ENCODE measurements at regions of chr7 and their contacts with region 1.

Region 1: DNA sequence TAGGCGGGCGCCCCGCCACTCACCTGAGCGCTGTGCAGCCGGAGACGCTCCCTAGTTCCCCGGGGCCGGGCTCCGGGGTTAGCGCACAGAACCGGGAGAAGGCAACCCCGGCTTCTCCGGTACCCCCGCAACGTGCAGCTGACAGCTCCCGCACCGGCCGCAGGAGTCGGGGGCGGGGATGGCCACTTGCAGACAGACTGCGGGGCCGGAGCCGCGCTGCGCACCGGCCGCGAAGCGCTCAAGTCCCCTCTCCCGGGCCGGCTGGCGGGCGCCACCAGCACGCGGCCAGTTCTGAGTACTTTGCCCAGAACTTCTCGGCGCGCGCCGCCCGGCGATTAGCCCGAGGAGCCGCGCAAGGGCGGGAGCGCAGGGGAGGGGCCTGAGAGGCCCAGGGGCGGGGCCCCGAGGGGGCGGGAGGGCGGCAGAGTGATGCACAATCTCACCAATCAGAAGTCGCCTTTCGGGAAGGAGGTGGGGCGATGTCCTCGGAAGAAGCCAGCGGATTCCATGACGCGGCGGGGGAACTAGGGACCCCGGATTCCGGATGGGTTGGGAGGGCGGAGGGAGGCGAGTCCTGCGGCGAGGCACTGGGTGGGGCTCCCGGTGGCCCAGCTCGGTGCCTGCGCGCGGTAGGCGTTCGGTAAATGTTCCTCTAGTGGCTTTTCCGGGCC is at the start of gene OSBPL3:
- DNase-seq: peak; percentile 95
- ATAC-seq: peak; percentile 91
- H3K4me3 ChIP-seq: peak within 1 kb of the TSS; percentile 77
- H3K27ac ChIP-seq: peak within 1 kb of the TSS; percentile 84
- H3K4me1 ChIP-seq: peaks cover 8% of the 10 kb centered on the region
- H3K27me3 ChIP-seq: no peaks in the 10 kb centered on the region
- CTCF ChIP-seq: peak; percentile 33; the same call in 1 of the 2 replicates
- POLR2A ChIP-seq: peak; percentile 79
- RAD21 ChIP-seq: peak; percentile 41
- total RNA-seq, gene OSBPL3: 29.9 and 30.0 TPM in 2 replicates

Region 2: DNA sequence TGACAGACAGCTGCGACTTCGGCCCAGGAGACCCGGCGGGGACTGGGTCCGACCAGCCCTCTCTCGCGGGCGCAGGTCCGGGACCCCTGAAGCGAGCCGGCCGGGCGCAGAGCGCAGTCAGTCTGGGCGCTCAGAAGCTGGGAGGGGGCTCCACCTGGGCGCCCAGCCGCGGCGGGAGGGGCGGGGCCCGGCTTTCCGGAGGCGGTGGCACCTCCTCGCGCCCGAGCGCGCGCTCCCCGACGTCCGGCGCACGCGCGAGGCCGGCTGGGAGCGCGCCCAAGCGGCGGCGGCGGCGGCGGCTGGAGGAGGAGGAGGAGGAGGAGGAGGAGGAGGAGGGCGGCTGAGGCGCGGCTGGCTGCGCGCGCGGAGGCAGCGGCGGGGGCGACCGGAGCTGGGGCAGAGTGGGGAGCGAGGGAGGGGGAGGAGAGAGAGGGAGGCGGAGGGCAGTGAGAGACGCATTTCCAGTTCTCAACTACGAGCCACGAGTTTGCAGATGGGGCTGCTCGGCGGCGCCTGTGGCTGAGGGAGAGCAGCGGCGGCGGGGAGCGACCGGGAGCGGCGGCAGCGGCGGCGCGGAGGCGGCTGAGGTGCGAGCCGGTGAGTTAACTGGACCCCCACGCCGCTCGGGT is 406.9 kb before region 1 on chr7 and contains the start of gene PALS2:
- CTCF ChIA-PET with region 1: no interaction called
- POLR2A ChIA-PET with region 1: no interaction called
- dilution Hi-C with region 1: no loop called
- in situ Hi-C with region 1: no loop called
- intact Hi-C with region 1: loop called (anchors 10 kb)
- DNase-seq: peak; percentile 58
- ATAC-seq: peak; percentile 76
- H3K4me3 ChIP-seq: peak within 1 kb of the TSS; percentile 98
- H3K27ac ChIP-seq: peak within 1 kb of the TSS; percentile 65
- H3K4me1 ChIP-seq: 0 out of 2 replicates have a peak, but pooled peaks cover 2% of the 10 kb centered on the region
- H3K27me3 ChIP-seq: peaks cover 26% of the 10 kb centered on the region
- CTCF ChIP-seq: no peak
- POLR2A ChIP-seq: no peak
- RAD21 ChIP-seq: no peak
- total RNA-seq, gene PALS2: 15.4 and 29.7 TPM in 2 replicates

Region 3: DNA sequence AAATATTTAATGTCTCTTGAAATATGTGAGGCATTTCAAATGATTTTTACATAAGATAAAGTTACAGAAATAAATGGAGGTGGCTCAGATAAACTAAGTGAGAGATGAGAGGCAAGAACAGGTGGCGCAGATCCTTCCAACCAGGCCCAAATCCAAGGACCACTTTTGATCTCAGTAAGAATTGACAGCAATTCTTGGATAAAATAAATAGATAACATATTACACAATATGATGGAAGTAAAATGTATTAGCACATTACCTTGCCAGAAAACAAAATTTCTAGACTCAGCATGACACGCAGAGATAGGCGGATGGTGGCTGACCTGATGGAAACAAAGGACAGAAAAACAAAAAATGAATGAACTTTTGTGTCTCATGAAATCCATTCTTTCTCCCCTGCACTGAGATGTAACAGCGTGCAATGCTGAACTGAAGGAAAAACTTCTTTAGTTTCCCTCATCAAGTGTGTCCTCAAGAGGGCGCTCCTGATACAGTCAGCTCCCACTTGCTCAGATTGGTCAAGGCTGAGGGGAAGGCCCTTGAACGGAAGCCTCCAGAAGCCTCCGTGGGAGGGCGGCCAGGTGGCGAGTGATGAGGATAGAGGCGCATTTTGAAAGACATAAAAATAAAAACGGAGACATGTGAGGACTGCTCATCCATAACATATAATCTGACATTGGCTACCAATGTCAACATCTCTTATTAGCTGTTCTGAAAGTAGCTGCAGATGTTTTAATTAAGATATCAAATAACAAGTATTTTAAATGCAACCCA is 159.9 kb before region 1 on chr7:
- CTCF ChIA-PET with region 1: interaction called, 33 read pairs
- POLR2A ChIA-PET with region 1: interaction called, 3 read pairs
- dilution Hi-C with region 1: no loop called
- in situ Hi-C with region 1: no loop called
- intact Hi-C with region 1: loop called (anchors 1 kb)
- DNase-seq: peak; percentile 90
- ATAC-seq: peak; percentile 86
- H3K4me3 ChIP-seq: no peak overlapping the region
- H3K27ac ChIP-seq: no peak overlapping the region
- H3K4me1 ChIP-seq: peaks cover 12% of the 10 kb centered on the region
- H3K27me3 ChIP-seq: no peaks in the 10 kb centered on the region
- CTCF ChIP-seq: peak; percentile 89
- POLR2A ChIP-seq: no peak; the same call in 1 of the 2 replicates
- RAD21 ChIP-seq: peak; percentile 90

Region 4: GRCh38 chr7:24926623-24927524 is 53.1 kb before region 1 on chr7:
- CTCF ChIA-PET with region 1: no interaction called
- POLR2A ChIA-PET with region 1: no interaction called
- dilution Hi-C with region 1: no loop called
- in situ Hi-C with region 1: no loop called
- intact Hi-C with region 1: loop called (anchors 10 kb)
- DNase-seq: peak; percentile 89
- ATAC-seq: peak; percentile 84
- H3K4me3 ChIP-seq: no peak overlapping the region
- H3K27ac ChIP-seq: peak overlapping the region; percentile 25; the same call in 1 of the 2 replicates
- H3K4me1 ChIP-seq: peaks cover 22% of the 10 kb centered on the region
- H3K27me3 ChIP-seq: no peaks in the 10 kb centered on the region
- CTCF ChIP-seq: no peak
- POLR2A ChIP-seq: no peak
- RAD21 ChIP-seq: no peak

Region 5: DNA sequence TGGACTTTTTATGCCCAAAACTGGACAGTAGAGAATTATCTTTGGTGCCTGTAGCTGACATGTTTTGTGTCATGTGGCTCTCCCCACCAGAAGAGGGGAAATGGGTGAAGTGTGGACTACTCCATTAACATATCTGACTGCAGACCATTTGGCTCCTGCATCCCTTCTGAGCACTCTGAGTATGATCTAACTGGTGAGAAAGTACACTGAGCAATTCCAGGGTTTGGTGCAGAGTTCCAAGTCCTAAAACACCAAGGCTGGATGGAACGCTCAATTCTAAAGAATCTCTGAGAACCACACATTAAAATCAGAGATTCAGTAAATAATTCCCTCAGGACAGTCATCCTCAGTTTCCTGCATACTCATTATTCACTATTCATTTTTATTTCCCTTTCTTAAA is 22.8 kb after region 1 on chr7:
- CTCF ChIA-PET with region 1: no interaction called
- POLR2A ChIA-PET with region 1: no interaction called
- dilution Hi-C with region 1: no loop called
- in situ Hi-C with region 1: no loop called
- intact Hi-C with region 1: no loop called
- DNase-seq: peak; percentile 50
- ATAC-seq: peak; percentile 35; the same call in 1 of the 2 replicates
- H3K4me3 ChIP-seq: no peak overlapping the region
- H3K27ac ChIP-seq: no peak overlapping the region
- H3K4me1 ChIP-seq: no peaks in the 10 kb centered on the region
- H3K27me3 ChIP-seq: no peaks in the 10 kb centered on the region
- CTCF ChIP-seq: no peak
- POLR2A ChIP-seq: no peak
- RAD21 ChIP-seq: no peak

Region 6: GRCh38 chr7:25069900-25070443 is 90.0 kb after region 1 on chr7:
- CTCF ChIA-PET with region 1: interaction called, 17 read pairs
- POLR2A ChIA-PET with region 1: no interaction called
- dilution Hi-C with region 1: no loop called
- in situ Hi-C with region 1: loop called (anchors 10 kb)
- intact Hi-C with region 1: loop called (anchors 1 kb)
- DNase-seq: peak; percentile 88
- ATAC-seq: peak; percentile 52
- H3K4me3 ChIP-seq: no peak overlapping the region
- H3K27ac ChIP-seq: no peak overlapping the region
- H3K4me1 ChIP-seq: peaks cover 4% of the 10 kb centered on the region; the same call in 1 of the 2 replicates
- H3K27me3 ChIP-seq: no peaks in the 10 kb centered on the region
- CTCF ChIP-seq: peak; percentile 94
- POLR2A ChIP-seq: no peak
- RAD21 ChIP-seq: peak; percentile 92